Breast epithelium (tissue), 4 donors: ENCODE measurements at regions of chr4 and their contacts with region 1.

Region 1: DNA sequence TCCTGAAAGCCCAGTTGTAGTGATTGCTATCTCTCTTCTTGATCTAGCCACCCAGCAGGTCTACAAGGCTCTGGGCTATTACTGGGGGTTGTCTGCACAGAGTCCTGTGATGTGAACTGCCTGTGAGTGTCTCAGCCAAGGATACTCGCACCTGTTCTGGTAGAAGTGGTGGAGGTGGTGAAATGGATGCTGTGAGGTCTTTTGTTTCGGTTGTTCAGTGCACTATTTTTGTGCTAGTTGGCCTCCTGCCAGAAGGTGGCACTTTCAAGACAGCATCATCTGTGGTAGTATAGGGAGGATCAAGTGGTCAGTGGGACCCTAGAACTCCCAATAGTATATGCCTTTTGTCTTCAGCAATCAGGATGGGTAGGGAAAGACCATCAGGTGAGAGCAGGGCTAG is 268.0 kb downstream of the GABRG1 start:
- DNase-seq: no peak
- H3K4me3 ChIP-seq: no peak overlapping the region
- H3K27ac ChIP-seq: no peak overlapping the region
- H3K4me1 ChIP-seq: no peaks in the 10 kb centered on the region
- H3K27me3 ChIP-seq: no peaks in the 10 kb centered on the region
- CTCF ChIP-seq: no peak
- POLR2A ChIP-seq: no peak

Region 2: GRCh38 chr4:45831692-45832091 is 24.2 kb before region 1 on chr4:
- intact Hi-C with region 1: loop called (anchors 2 kb)
- DNase-seq: no peak
- H3K4me3 ChIP-seq: no peak overlapping the region
- H3K27ac ChIP-seq: no peak overlapping the region
- H3K4me1 ChIP-seq: no peaks in the 10 kb centered on the region
- H3K27me3 ChIP-seq: no peaks in the 10 kb centered on the region
- CTCF ChIP-seq: no peak
- POLR2A ChIP-seq: no peak